Activated T-helper 2 cell treated with anti-CD3 and anti-CD28 coated beads, Interferon-gamma antibody, Interleukin-2, Interleukin-4, amounts not matched to agents 10 μg/mL and 5 μg/mL and 100 μg/mL, durations not matched to agents 14 hours and 24 hours and 36 hours (primary cell): ENCODE measurements at regions of chr5 and their contacts with region 1.

Region 1: GRCh38 chr5:80093796-80094195 is 58.6 kb downstream of the THBS4 start:
- DNase-seq: no peak
- H3K4me3 Mint-ChIP-seq: no peak overlapping the region
- H3K27ac Mint-ChIP-seq: no peak overlapping the region
- H3K4me1 Mint-ChIP-seq: peaks cover 26% of the 10 kb centered on the region
- H3K27me3 Mint-ChIP-seq: no peaks in the 10 kb centered on the region

Region 2: DNA sequence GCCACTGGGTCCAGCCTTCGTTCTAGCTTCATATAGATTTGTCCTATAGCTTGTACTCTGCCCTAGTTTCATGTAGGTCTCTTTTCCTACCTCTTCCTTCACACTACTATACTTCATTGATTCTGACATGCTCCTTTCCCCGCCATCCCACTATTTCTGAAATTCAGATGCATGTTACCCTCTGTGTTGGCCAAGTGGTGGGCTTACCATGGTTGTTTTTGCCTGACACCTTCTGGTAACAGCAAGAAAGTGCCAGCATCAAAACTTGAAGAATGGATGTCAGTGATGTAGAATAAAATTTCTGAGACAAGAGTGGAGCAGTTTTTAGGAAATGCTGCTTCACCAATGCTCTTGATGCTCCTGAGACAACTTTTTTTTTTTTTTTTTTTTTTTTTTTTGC is 181.6 kb after region 1 on chr5:
- intact Hi-C with region 1: loop called (anchors 1 kb)
- DNase-seq: no peak
- H3K4me3 Mint-ChIP-seq: no peak overlapping the region
- H3K27ac Mint-ChIP-seq: no peak overlapping the region
- H3K4me1 Mint-ChIP-seq: peaks cover 17% of the 10 kb centered on the region
- H3K27me3 Mint-ChIP-seq: no peaks in the 10 kb centered on the region

Region 3: DNA sequence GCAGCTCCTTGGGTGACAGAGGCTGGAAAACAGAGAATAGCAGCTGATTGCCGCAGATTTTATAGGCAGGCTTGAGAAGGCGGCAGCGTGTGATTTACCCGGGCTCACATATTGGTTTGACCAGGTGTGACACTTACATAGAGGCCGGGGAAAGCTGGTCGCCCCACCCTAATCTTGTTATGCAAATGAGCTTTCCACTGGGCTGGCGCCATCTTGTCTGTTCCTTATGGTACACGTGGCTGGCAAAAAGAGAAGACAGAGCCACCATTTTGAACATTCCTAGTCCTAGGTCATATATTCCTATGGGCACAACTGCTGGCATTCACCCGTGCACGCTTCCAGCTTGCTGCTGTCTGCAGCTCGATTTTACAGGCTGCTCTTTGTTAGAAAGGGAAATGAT is 214.7 kb after region 1 on chr5:
- intact Hi-C with region 1: loop called (anchors 1 kb)
- DNase-seq: no peak
- H3K4me3 Mint-ChIP-seq: no peak overlapping the region
- H3K27ac Mint-ChIP-seq: no peak overlapping the region
- H3K4me1 Mint-ChIP-seq: no peaks in the 10 kb centered on the region
- H3K27me3 Mint-ChIP-seq: no peaks in the 10 kb centered on the region

Region 4: DNA sequence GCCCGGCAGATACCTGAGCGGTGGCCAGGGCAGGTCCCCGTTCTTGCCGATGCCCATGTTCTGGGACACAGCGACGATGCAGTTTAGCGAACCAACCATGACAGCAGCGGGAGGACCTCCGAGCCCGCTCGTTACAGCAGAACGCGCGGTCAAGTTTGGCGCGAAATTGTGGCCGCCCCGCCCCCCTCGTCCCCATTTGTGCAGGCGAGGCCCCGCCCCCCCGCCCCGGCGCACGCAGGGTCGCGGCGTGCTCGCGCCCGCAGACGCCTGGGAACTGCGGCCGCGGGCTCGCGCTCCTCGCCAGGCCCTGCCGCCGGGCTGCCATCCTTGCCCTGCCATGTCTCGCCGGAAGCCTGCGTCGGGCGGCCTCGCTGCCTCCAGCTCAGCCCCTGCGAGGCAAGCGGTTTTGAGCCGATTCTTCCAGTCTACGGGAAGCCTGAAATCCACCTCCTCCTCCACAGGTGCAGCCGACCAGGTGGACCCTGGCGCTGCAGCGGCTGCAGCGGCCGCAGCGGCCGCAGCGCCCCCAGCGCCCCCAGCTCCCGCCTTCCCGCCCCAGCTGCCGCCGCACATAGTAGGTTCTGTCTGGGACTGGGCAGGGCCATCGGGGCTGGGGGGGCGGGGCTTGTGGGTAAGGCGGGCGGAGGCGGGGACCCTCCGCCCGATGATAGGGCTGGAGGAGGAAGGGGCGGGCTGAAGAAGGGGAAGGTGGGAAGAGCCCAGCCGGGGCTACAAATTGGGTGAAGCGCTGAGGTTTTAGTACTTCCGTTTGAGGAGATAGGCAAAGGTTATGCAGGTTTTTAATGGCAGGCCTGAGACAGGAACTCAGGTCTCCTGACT is 560.8 kb after region 1 on chr5 and contains the starts of genes DHFR and MSH3:
- intact Hi-C with region 1: no loop called
- DNase-seq: peak; percentile 85
- H3K4me3 Mint-ChIP-seq: peak within 1 kb of the TSS; percentile 88
- H3K27ac Mint-ChIP-seq: peak within 1 kb of the TSS; percentile 96
- H3K4me1 Mint-ChIP-seq: peaks cover 20% of the 10 kb centered on the region
- H3K27me3 Mint-ChIP-seq: no peaks in the 10 kb centered on the region
- total RNA-seq, gene DHFR: 55.7 and 56.9 TPM in 2 replicates
- total RNA-seq, gene MSH3: 20.6 and 21.2 TPM in 2 replicates